Activated naive CD4-positive, alpha-beta T cell treated with anti-CD3 and anti-CD28 coated beads for 36 hours (primary cell): ENCODE measurements at regions of chr6 and their contacts with region 1.

Region 1: DNA sequence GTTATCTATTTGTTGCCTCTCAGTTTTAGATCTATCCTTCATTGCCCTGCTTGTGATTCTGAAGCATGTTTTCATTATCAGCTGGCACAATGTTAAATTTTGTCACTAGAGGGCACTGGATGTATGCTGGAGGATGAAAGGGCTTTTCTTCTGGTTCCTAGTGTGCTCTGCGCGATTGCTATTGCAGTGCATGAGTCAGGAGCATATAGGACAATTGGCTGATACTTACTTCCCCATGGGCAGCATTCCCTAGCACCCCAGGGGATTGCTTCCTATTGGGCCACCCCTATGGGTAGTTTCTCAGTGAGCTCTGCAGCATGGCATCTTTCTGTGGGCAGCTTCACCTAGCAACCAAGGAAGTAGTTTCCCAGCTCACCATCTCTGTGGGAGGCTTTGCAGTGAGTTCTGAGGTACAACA is 280.3 kb upstream of the SYNCRIP start:
- DNase-seq: peak; percentile 22
- H3K4me3 Mint-ChIP-seq: no peak overlapping the region
- H3K27ac Mint-ChIP-seq: no peak overlapping the region
- H3K4me1 Mint-ChIP-seq: no peaks in the 10 kb centered on the region
- H3K27me3 Mint-ChIP-seq: no peaks in the 10 kb centered on the region

Region 2: GRCh38 chr6:85824326-85824725 is 98.7 kb before region 1 on chr6:
- CTCF ChIA-PET with region 1: no interaction called
- intact Hi-C with region 1: no loop called
- DNase-seq: no peak
- H3K4me3 Mint-ChIP-seq: no peak overlapping the region
- H3K27ac Mint-ChIP-seq: no peak overlapping the region
- H3K4me1 Mint-ChIP-seq: no peaks in the 10 kb centered on the region
- H3K27me3 Mint-ChIP-seq: no peaks in the 10 kb centered on the region

Region 3: GRCh38 chr6:86192123-86192522 is 269.1 kb after region 1 on chr6:
- CTCF ChIA-PET with region 1: interaction called, 9 read pairs
- intact Hi-C with region 1: loop called (anchors 5 kb)
- DNase-seq: no peak
- H3K4me3 Mint-ChIP-seq: no peak overlapping the region
- H3K27ac Mint-ChIP-seq: no peak overlapping the region
- H3K4me1 Mint-ChIP-seq: no peaks in the 10 kb centered on the region
- H3K27me3 Mint-ChIP-seq: no peaks in the 10 kb centered on the region

Region 4: DNA sequence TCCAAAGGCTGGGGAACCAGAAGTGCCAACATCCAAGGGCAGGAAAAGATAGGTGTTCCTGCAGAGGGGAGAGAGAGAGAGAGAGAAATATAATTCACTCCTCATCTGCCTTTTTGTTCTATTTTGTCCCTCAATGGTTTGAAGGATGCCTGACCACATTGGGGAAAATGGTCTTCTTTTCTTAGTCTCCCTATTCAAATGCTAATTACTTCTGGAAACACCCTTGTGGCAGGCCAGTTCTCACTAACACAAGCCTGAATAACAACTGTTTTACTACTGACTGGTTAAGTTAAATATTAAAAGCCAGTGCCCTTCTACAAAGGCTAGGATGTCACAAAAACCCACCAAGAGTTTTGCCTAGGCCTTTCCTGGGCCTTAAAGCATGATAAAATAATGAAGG is 588.9 kb after region 1 on chr6:
- CTCF ChIA-PET with region 1: no interaction called
- intact Hi-C with region 1: no loop called
- DNase-seq: no peak
- H3K4me3 Mint-ChIP-seq: no peak overlapping the region
- H3K27ac Mint-ChIP-seq: no peak overlapping the region
- H3K4me1 Mint-ChIP-seq: no peaks in the 10 kb centered on the region
- H3K27me3 Mint-ChIP-seq: no peaks in the 10 kb centered on the region

Region 5: GRCh38 chr6:86856937-86857563 is 934.0 kb after region 1 on chr6:
- CTCF ChIA-PET with region 1: interaction called, 3 read pairs
- intact Hi-C with region 1: loop called (anchors 1 kb)
- DNase-seq: peak; percentile 58
- H3K4me3 Mint-ChIP-seq: no peak overlapping the region
- H3K27ac Mint-ChIP-seq: no peak overlapping the region
- H3K4me1 Mint-ChIP-seq: no peaks in the 10 kb centered on the region
- H3K27me3 Mint-ChIP-seq: no peaks in the 10 kb centered on the region

Region 6: DNA sequence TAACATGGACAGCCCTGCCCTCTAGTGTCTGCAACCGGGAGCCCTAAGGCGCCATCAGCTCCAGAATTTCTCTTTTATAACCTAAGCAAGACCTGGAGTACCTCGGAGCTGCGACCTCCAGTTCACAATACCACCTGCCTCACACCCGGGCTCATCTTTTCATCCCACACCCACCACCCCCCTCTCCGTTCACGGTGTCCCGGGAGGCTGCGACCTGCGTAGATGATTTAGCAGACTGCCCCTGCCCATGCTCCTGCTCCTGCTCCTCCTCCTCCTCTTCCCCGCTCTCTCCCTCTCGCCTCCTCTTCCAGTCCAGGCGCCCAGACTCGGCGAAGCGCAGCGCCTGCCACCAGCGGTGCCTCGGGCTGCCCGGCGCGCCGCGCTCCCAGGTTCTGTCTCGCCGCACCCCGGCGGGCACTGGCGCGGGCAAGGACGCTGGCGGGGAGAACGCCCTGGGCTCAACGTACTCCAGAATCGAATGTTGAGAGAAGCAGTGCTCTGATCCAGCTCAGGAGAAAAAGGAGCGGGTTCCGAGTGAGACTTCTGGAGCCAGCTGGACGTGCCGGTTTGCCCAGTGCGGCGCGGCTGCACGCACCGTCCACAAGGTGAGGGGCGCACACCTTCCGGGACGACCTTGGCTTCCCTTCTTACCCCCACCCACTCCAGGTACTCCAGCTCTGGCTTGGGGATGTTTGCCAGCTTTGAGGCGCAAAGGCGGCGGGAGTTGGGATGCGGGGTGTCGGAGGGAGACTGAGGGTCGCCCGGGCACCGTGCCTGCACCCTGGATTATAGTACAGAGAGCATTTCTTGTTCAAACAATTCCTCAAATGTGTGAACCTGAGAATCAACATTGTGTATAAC is 1014.4 kb after region 1 on chr6 and contains the start of gene HTR1E:
- CTCF ChIA-PET with region 1: interaction called, 3 read pairs
- intact Hi-C with region 1: loop called (anchors 1 kb)
- DNase-seq: peak; percentile 34
- H3K4me3 Mint-ChIP-seq: no peak within 1 kb of the TSS
- H3K27ac Mint-ChIP-seq: no peak within 1 kb of the TSS
- H3K4me1 Mint-ChIP-seq: peaks cover 2% of the 10 kb centered on the region
- H3K27me3 Mint-ChIP-seq: peaks cover 37% of the 10 kb centered on the region
- total RNA-seq, gene HTR1E: not detected

Region 7: GRCh38 chr6:87029711-87030314 is 1106.8 kb after region 1 on chr6:
- CTCF ChIA-PET with region 1: interaction called, 4 read pairs
- intact Hi-C with region 1: loop called (anchors 1 kb)
- DNase-seq: no peak
- H3K4me3 Mint-ChIP-seq: no peak overlapping the region
- H3K27ac Mint-ChIP-seq: no peak overlapping the region
- H3K4me1 Mint-ChIP-seq: no peaks in the 10 kb centered on the region
- H3K27me3 Mint-ChIP-seq: no peaks in the 10 kb centered on the region